RWPE1 (cell line): ENCODE measurements at regions of chr15 and their contacts with region 1.

Region 1: GRCh38 chr15:70376929-70377691 is 279.4 kb upstream of the TLE3 start:
- DNase-seq: peak; percentile 59
- H3K27ac ChIP-seq: peak overlapping the region; percentile 84
- CTCF ChIP-seq: no peak

Region 2: GRCh38 chr15:70259028-70259424 is 118.1 kb before region 1 on chr15:
- CTCF ChIA-PET with region 1: no interaction called
- POLR2A ChIA-PET with region 1: no interaction called
- DNase-seq: no peak
- H3K27ac ChIP-seq: no peak overlapping the region
- CTCF ChIP-seq: no peak

Region 3: DNA sequence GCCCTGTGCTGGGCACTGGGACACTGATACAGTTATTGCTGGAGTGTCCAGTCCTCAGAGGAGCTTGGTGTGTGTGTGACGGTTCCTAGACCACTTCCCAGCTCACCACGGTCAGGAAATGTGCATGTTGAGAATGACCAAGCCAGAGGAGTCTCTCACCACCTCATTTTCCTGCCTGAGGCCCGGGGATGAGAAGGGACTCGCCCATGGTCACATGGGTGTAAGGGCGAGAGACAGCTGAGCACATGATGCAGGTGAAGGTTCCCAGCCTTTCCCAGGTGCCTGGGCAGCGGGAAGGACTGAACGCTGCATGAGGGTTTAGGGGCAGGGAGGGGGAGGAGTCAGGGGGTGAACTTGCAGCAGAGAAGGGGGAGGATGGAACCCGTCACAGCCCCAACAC is 98.4 kb before region 1 on chr15:
- CTCF ChIA-PET with region 1: no interaction called
- POLR2A ChIA-PET with region 1: interaction called, 12 read pairs
- DNase-seq: no peak
- H3K27ac ChIP-seq: no peak overlapping the region
- CTCF ChIP-seq: no peak

Region 4: GRCh38 chr15:70512772-70513362 is 135.8 kb after region 1 on chr15:
- CTCF ChIA-PET with region 1: no interaction called
- POLR2A ChIA-PET with region 1: no interaction called
- DNase-seq: peak; percentile 60
- H3K27ac ChIP-seq: no peak overlapping the region
- CTCF ChIP-seq: peak; percentile 68